CD4-positive, alpha-beta T cell (primary cell): ENCODE measurements at regions of chr11 and their contacts with region 1.

Region 1: DNA sequence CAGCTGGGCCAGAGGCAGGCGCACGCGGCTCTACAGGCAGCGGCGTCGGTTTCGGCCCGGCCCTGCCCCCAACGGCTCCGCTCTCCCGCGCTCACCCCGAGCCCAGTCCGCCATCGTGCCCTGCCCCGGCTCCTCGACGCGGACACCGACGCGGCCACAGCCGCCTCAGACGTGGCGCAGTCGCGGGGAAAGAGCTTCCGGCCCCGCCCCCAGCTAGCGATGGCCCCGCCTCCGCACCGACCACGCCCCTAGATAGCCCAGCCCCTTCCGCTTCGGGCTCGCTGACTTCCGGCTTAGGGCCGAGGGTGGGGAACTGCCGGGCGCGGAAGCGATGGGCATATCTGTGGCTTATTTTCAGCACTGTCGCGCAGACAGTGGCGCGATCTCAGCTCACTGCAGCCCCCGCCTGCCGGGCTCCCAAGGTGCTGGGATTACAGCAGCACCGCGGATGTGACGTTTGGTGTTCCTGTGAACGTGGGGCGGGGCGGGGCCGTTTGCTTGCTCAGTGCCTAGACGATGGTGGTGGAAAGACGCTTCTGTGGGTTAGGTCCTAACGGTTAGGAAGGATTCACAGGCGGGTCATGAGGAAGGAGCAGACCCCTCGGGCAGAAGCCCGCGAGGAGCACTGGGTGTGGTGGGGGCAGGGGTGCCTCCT is at the starts of genes BET1L and RIC8A:
- DNase-seq: peak; percentile 94 to 100 (median 97)
- ATAC-seq: peak; percentile 76
- H3K4me3 ChIP-seq: peak within 1 kb of the TSS; percentile 69
- H3K4me3 Mint-ChIP-seq: peak within 1 kb of the TSS; percentile 95
- H3K27ac ChIP-seq: peak within 1 kb of the TSS; percentile 93 to 94
- H3K27ac Mint-ChIP-seq: peak within 1 kb of the TSS; percentile 99
- H3K4me1 ChIP-seq: peaks cover 78% of the 10 kb centered on the region
- H3K4me1 Mint-ChIP-seq: peaks cover 61% of the 10 kb centered on the region
- H3K27me3 ChIP-seq: no peaks in the 10 kb centered on the region
- H3K27me3 Mint-ChIP-seq: no peaks in the 10 kb centered on the region
- CTCF ChIP-seq: no peak
- total RNA-seq, gene BET1L: 69.5 to 72.7 TPM
- total RNA-seq, gene RIC8A: 99.6 to 104 TPM

Region 2: GRCh38 chr11:250740-251299 is 43.5 kb after region 1 on chr11:
- CTCF ChIA-PET with region 1: interaction called, 3 read pairs
- POLR2A ChIA-PET with region 1: interaction called, 10 read pairs
- intact Hi-C with region 1: loop called in 1 of 2 experiments (anchors 5 kb)
- DNase-seq: peak; percentile 74 to 89 (median 82)
- ATAC-seq: peak; percentile 100
- H3K4me3 ChIP-seq: no peak overlapping the region
- H3K4me3 Mint-ChIP-seq: peak overlapping the region; percentile 20
- H3K27ac ChIP-seq: no peak overlapping the region
- H3K27ac Mint-ChIP-seq: peak overlapping the region; percentile 76
- H3K4me1 ChIP-seq: peaks cover 6% of the 10 kb centered on the region
- H3K4me1 Mint-ChIP-seq: peaks cover 13% of the 10 kb centered on the region
- H3K27me3 ChIP-seq: no peaks in the 10 kb centered on the region
- H3K27me3 Mint-ChIP-seq: no peaks in the 10 kb centered on the region
- CTCF ChIP-seq: peak; percentile 78

Region 3: GRCh38 chr11:288328-289144 is 81.2 kb after region 1 on chr11 and contains the start of gene PGGHG:
- CTCF ChIA-PET with region 1: no interaction called
- POLR2A ChIA-PET with region 1: interaction called, 32 read pairs
- intact Hi-C with region 1: no loop called
- DNase-seq: peak in 11 of 14 experiments; percentile 18 to 75 (median 57)
- ATAC-seq: peak; percentile 10
- H3K4me3 ChIP-seq: peak within 1 kb of the TSS; percentile 82
- H3K4me3 Mint-ChIP-seq: peak within 1 kb of the TSS; percentile 91
- H3K27ac ChIP-seq: peak within 1 kb of the TSS; percentile 72 to 98
- H3K27ac Mint-ChIP-seq: peak within 1 kb of the TSS; percentile 93
- H3K4me1 ChIP-seq: peaks cover 42% of the 10 kb centered on the region
- H3K4me1 Mint-ChIP-seq: peaks cover 34% of the 10 kb centered on the region
- H3K27me3 ChIP-seq: peaks cover 0 to 5% of the 10 kb centered on the region in 2 experiments
- H3K27me3 Mint-ChIP-seq: peaks cover 4% of the 10 kb centered on the region
- CTCF ChIP-seq: no peak
- total RNA-seq, gene PGGHG: 670 to 671 TPM

Region 4: DNA sequence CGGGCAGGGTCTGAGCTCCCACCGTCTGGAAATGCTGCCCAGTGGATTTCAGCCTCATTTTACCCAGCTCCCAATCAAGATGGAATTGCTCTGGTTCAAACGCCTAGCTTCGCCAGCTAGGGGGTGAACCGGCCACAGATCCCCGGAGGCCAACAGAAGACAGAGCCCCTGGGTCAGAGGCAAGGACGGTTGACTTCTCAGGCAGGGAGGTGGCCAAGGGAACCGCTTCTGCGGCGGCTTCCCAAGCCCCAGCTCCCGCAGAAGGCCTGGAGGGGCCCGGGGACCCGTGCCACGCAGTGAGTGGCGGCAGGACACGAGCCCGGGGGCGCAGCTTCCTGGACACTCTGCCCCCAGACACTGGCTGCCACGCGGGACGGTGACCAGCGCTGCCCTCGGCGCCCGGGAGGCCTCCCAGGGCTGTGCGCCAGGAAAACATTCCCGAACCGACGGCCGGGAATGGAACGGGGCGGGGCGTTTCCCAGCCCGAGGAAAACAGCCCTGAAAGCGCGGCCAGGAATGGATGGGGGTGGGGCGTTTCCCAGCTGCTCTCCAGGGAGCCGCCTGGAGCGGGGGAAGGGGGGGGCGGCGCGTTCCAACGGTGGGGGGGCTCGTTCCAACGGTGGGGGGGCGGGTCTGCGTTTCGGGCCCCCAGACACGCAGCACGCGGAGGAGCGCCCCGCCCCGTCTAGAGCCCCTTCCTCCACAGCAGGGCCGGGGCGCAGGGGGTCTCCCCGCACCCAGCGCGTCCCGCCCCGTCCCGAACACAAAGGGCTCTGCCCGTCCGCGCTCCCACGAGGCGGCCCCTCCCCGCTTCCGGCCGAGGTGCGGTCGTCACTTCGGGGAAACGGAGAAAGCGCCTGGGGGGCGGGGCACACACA is 148.5 kb after region 1 on chr11:
- CTCF ChIA-PET with region 1: no interaction called
- POLR2A ChIA-PET with region 1: interaction called, 18 read pairs
- intact Hi-C with region 1: loop called in 1 of 2 experiments (anchors 5 kb)
- DNase-seq: peak; percentile 59 to 94 (median 88)
- ATAC-seq: peak; percentile 64
- H3K4me3 ChIP-seq: peak overlapping the region; percentile 55
- H3K4me3 Mint-ChIP-seq: peak overlapping the region; percentile 83
- H3K27ac ChIP-seq: peak overlapping the region; percentile 92 to 95
- H3K27ac Mint-ChIP-seq: no peak overlapping the region
- H3K4me1 ChIP-seq: peaks cover 31% of the 10 kb centered on the region
- H3K4me1 Mint-ChIP-seq: peaks cover 45% of the 10 kb centered on the region
- H3K27me3 ChIP-seq: no peaks in the 10 kb centered on the region
- H3K27me3 Mint-ChIP-seq: no peaks in the 10 kb centered on the region
- CTCF ChIP-seq: no peak

Region 5: DNA sequence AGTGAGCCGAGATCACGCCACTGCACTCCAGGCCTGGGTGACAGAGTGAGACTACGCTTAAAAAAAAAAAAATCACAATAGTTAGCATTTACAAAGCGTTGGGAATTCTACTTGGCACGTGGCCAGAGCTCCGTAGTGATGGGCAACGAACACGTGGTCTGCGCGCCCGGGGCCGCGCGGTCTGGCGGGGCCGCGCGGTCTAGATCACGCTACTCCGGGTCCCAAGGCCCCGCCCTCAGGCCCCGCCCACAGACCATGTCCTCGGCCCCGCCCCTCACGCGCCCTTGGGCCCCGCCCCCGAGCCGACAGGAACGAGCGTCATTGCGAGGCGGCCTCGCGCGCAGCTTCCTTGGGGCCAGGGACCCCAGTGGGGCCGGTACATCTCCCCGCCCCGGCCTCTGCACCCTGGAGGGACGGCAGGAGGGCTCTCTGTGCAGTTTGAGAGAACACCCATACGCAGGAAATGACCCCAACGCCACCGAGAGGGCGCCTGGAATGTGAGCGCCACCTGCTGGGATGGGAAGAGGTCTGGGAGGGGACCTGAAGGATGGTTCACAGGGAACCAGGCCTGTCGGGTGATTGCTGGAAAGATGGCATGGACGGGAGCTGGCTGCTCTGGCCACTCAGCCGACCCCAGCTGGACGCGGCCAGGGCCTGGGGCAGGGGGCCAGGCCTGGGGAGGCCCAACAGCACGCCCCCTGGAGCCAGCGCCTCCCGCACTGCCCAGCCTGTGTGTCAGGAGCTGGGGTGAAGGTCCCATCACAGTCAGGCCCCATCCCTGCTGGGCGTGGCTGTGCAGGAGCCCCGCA is 240.8 kb after region 1 on chr11:
- CTCF ChIA-PET with region 1: interaction called, 7 read pairs
- POLR2A ChIA-PET with region 1: interaction called, 38 read pairs
- intact Hi-C with region 1: loop called (anchors 1 to 5 kb)
- DNase-seq: peak; percentile 91 to 98 (median 94)
- ATAC-seq: peak; percentile 66
- H3K4me3 ChIP-seq: peak overlapping the region; percentile 63
- H3K4me3 Mint-ChIP-seq: peak overlapping the region; percentile 93
- H3K27ac ChIP-seq: peak overlapping the region; percentile 84 to 89
- H3K27ac Mint-ChIP-seq: peak overlapping the region; percentile 95
- H3K4me1 ChIP-seq: peaks cover 38% of the 10 kb centered on the region
- H3K4me1 Mint-ChIP-seq: peaks cover 26% of the 10 kb centered on the region
- H3K27me3 ChIP-seq: no peaks in the 10 kb centered on the region
- H3K27me3 Mint-ChIP-seq: no peaks in the 10 kb centered on the region
- CTCF ChIP-seq: peak; percentile 93

Region 6: GRCh38 chr11:575996-576768 is 368.8 kb after region 1 on chr11 and contains the start of gene PHRF1:
- CTCF ChIA-PET with region 1: no interaction called
- POLR2A ChIA-PET with region 1: interaction called, 16 read pairs
- intact Hi-C with region 1: no loop called
- DNase-seq: peak; percentile 91 to 98 (median 96)
- ATAC-seq: peak; percentile 90
- H3K4me3 ChIP-seq: peak within 1 kb of the TSS; percentile 87
- H3K4me3 Mint-ChIP-seq: peak within 1 kb of the TSS; percentile 95
- H3K27ac ChIP-seq: peak within 1 kb of the TSS; percentile 87 to 98
- H3K27ac Mint-ChIP-seq: peak within 1 kb of the TSS; percentile 92
- H3K4me1 ChIP-seq: peaks cover 56% of the 10 kb centered on the region
- H3K4me1 Mint-ChIP-seq: peaks cover 48% of the 10 kb centered on the region
- H3K27me3 ChIP-seq: no peaks in the 10 kb centered on the region
- H3K27me3 Mint-ChIP-seq: peaks cover 4% of the 10 kb centered on the region
- CTCF ChIP-seq: no peak
- total RNA-seq, gene PHRF1: 37.1 to 37.6 TPM

Region 7: DNA sequence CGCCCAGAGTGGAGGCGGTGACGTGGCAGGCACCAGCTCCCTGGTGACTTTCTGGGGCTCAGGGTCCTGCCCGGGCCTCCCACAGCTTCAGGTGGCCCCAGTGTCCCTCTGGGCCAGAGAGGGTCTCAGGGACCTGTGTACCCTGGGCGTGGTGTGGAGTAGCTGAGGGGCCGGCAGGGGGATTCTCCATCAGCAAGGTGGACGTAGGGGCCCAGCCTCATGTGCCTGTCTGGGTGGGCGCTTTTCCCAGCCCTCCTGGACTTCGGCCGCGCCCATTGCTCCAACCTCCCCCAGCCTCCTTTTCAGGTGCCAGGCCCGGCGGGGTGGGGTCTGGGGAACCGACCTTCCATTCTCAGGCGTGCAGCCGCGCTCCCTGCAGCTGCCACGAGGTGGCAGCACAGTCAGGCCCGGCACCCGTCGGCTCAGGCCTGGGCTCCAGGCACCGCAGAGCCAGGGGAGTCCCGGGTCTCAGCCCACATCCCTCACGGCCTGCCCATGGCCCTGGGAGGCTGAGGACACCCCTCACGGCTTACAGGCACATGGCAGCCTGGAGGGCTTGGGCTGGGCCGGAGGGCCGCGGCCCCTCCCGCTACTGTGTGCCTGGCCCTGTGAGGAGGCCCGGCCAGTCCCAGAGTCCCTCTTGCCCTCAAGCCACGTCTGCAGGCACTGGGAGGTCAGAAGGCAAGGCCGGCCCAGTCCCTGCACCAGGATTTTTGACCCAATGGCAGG is 995.6 kb after region 1 on chr11:
- CTCF ChIA-PET with region 1: no interaction called
- POLR2A ChIA-PET with region 1: no interaction called
- intact Hi-C with region 1: no loop called
- DNase-seq: peak; percentile 39 to 81 (median 57)
- ATAC-seq: peak; percentile 88
- H3K4me3 ChIP-seq: no peak overlapping the region
- H3K4me3 Mint-ChIP-seq: no peak overlapping the region
- H3K27ac ChIP-seq: no peak overlapping the region
- H3K27ac Mint-ChIP-seq: no peak overlapping the region
- H3K4me1 ChIP-seq: peaks cover 8% of the 10 kb centered on the region
- H3K4me1 Mint-ChIP-seq: no peaks in the 10 kb centered on the region
- H3K27me3 ChIP-seq: peaks cover 0 to 3% of the 10 kb centered on the region in 2 experiments
- H3K27me3 Mint-ChIP-seq: no peaks in the 10 kb centered on the region
- CTCF ChIP-seq: peak; percentile 84

Region 8: GRCh38 chr11:1749414-1750312 is 1542.3 kb after region 1 on chr11:
- CTCF ChIA-PET with region 1: no interaction called
- POLR2A ChIA-PET with region 1: no interaction called
- intact Hi-C with region 1: loop called in 1 of 2 experiments (anchors 10 kb)
- DNase-seq: no peak
- ATAC-seq: no peak
- H3K4me3 ChIP-seq: no peak overlapping the region
- H3K4me3 Mint-ChIP-seq: peak overlapping the region; percentile 2
- H3K27ac ChIP-seq: no peak overlapping the region
- H3K27ac Mint-ChIP-seq: no peak overlapping the region
- H3K4me1 ChIP-seq: peaks cover 35% of the 10 kb centered on the region
- H3K4me1 Mint-ChIP-seq: peaks cover 25% of the 10 kb centered on the region
- H3K27me3 ChIP-seq: peaks cover 13 to 19% of the 10 kb centered on the region in 2 experiments
- H3K27me3 Mint-ChIP-seq: peaks cover 14% of the 10 kb centered on the region
- CTCF ChIP-seq: no peak